Right ventricle myocardium superior (tissue), 1 donor: ENCODE measurements at regions of chr1 and their contacts with region 1.

Region 1: DNA sequence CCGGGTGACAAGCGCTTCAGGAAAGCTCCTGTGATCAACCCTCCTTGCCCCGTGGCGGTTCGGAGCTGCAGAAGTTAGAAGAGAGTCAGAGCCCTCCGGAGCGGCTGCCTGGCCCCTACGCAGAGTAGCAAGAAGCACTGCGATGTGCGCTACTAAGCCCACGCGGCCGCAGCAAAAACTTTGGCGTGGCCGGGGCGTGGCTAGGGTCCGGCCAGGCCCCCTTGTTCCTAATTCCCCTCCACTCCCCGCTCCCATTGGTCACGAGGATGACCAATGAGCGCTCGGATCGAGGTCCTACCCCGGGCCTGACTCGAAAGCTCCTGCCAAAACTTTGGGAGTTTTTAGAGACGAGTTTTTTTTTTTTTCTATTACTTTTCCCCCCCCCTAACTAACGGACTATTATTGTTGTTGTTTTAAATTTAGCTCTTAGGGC is at the start of gene HLX:
- DNase-seq: peak; percentile 95
- ATAC-seq: peak; percentile 92
- total RNA-seq, gene HLX: 5.6 TPM

Region 2: DNA sequence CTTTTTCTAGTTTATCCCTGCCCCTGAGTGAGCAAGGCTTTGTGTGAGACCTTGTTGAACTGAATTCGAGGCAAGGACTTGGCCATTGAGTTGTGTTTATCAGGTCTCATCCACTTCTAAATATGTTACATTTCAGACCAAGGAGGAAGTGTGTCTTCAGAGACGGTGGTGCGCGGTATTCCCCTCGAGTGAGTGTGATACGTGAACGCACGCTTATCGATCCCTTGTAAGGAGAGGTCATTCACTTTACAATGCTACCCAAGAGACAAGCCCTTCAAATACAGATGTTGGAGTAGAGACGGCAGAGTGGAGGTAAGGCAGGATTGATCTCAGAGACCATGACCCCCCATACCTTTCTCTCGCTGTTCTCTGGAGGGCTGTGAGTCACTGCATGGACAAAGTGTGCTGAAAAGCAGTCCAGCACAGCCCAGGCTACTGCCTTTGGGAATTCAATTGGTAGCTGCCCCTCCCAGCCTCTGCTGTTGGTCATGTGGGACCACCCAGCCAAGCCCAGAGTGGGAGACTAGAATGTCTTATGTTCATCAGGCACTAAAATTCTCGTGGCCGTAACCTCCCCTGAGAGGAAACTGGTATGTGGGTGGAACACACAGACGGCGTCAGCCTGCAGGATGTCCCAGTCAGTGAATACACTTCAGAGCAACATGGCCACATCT is 108.7 kb before region 1 on chr1:
- intact Hi-C with region 1: no loop called
- DNase-seq: no peak
- ATAC-seq: no peak

Region 3: DNA sequence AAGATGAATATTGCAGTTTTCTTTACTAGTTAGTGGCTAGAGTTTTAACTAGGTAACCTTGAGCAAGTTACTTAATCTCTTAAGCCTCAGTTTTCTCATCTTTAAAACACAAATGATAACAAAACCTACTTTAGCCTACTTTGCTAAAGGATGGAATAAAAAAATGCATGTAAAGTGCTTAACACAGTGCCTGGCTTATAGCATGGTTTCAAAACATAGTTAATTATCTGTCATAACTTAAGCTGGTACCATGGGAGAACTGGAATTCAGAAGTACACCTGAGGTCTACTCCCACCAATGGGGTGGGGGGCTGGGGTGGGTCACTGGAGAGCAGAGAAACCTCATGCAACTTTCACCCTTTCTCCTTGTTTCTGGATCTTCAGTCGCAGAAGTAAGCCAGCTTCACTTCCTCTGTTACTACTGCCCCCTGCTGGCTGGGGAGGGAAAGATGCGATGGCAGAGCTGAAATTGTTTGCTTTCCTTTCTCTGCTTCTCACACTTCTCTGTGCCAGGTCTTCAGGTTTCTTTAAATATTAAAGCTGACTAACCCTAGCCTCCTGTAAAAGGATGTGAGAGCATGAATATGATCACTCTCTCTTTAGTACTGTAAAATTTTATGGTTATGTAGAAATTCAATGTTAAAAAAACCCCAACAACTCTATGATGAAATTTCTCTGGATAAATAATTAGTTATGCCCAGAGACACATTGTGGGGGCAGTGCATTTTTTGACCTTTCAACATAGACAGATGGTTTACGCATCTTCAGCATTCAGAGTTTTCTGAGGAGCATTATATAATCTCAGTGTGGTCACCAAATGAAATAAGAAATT is 324.3 kb after region 1 on chr1:
- intact Hi-C with region 1: loop called (anchors 2 kb)
- DNase-seq: peak; percentile 82
- ATAC-seq: peak; percentile 63

Region 4: DNA sequence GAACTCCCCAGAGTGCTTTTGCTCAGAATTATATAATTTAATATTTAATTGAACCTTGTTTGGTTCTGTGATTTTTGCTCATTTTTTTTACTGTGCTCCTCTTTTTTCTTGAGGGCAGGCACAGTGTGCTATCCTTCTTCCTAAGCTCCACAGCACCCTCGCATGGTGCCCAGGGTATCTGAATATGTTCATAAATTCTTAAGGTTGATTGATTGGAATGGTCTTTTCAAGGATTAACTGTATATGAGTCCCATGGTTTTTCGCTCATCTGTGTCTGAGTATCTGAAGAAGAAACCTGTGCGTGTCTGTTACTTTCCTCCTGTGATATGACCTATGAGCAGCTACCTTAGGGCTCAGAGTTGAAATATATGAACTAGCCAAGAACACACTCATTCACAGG is 393.8 kb after region 1 on chr1:
- intact Hi-C with region 1: loop called (anchors 10 kb)
- DNase-seq: no peak
- ATAC-seq: no peak